ENCODE measurements at regions of chr1 and their contacts with region 1.

Region 1: DNA sequence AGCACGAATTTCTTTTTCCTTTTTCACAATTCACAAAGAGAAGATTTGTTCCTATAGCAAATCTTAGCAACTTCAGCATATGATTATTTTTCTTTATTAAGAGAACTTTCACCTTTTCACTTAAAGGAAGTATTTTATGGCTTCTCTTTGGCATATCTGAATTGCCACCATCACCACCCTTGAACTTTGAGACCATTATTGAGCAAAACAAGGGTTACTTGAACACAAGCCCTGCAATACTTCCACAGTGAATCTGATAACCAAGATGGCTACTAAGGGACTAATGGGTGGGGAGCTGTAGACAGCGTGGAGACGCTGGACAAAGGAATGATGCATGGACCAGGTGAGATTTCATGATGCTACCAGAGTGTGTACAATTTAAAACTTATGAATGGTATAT is 815.0 kb downstream of the LRRIQ3 start:
- ATAC-seq: no peak
- H3K4me3 ChIP-seq: no peak overlapping the region
- H3K27ac ChIP-seq: no peak overlapping the region
- H3K4me1 ChIP-seq: no peaks in the 10 kb centered on the region

Region 2: DNA sequence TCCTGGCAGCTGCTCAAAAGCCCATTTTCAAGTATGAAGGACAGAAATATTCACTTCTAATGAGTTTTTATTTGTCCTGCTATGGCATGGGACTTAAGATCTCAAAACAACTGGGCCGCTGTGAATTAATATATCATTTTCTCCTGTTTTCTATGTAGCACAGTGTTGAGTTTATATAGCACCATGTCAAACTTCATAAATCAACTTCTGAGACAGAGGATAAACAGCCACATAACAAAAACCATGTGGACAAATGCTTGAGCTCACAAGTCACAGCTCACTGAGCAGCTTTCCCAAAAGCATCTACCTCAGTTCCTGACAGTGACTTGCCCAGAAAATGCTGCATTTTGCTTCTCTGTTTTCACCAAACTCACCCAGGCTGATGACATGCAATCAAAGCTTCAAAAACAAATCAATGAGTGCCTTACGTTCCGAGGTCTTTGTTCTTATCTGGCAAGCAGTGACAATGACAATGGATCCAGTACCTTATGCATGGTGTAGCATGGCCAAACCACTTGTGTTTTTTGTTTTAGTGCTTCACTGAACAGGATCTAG is 92.4 kb after region 1 on chr1:
- in situ Hi-C with region 1: loop called in 1 of 9 experiments (anchors 25 kb)
- ATAC-seq: peak in 4 of 8 experiments; percentile 16 to 95 (median 20)
- H3K4me3 ChIP-seq: no peak overlapping the region
- H3K27ac ChIP-seq: no peak overlapping the region
- H3K4me1 ChIP-seq: no peaks in the 10 kb centered on the region

Measured in motor neuron (in vitro differentiated cells).